Activated T-helper 1 cell treated with anti-CD3 and anti-CD28 coated beads, Interleukin-12 subunit alpha, Interleukin-12 subunit beta, Interleukin-2, Interleukin-4 antibody, amounts not matched to agents 30 ng/mL and 10 ng/mL and 1 ng/mL, durations not matched to agents 14 hours and 24 hours and 36 hours (primary cell): ENCODE measurements at regions of chr1 and their contacts with region 1.

Region 1: DNA sequence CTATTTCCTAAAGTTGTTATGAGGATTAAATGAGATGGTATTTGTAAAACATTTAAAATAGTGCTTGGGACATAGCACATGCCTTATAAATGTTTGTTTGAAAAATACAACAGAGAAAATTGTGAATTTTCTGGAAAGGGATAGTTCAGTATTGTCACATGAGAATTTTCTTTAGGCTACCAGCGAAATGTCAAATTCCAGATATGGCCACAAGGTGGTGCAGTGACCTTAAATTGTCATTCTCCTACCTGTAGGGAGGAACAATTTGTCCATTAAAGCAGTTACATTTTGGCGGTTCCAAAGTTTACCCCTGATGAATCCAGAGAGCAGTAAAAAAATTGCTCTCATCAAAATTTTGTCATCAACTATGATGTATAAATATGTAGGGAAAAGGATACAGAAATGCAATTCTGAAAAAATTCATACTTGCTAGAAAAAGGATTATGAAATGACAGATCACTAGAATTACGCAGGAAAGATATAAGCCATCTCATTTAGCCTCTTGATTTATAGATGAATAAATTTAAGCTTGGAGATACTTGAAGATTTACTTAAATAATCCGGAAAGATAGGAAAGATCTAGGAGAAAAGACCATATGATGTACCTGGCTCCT is 50.2 kb upstream of the TSHB start:
- DNase-seq: peak; percentile 27
- H3K4me3 Mint-ChIP-seq: no peak overlapping the region
- H3K27ac Mint-ChIP-seq: no peak overlapping the region
- H3K4me1 Mint-ChIP-seq: no peaks in the 10 kb centered on the region
- H3K27me3 Mint-ChIP-seq: peaks cover 8% of the 10 kb centered on the region

Region 2: GRCh38 chr1:115052454-115053083 is 73.2 kb after region 1 on chr1:
- intact Hi-C with region 1: loop called (anchors 1 kb)
- DNase-seq: peak; percentile 20
- H3K4me3 Mint-ChIP-seq: no peak overlapping the region
- H3K27ac Mint-ChIP-seq: no peak overlapping the region
- H3K4me1 Mint-ChIP-seq: peaks cover 13% of the 10 kb centered on the region
- H3K27me3 Mint-ChIP-seq: peaks cover 6% of the 10 kb centered on the region

Region 3: DNA sequence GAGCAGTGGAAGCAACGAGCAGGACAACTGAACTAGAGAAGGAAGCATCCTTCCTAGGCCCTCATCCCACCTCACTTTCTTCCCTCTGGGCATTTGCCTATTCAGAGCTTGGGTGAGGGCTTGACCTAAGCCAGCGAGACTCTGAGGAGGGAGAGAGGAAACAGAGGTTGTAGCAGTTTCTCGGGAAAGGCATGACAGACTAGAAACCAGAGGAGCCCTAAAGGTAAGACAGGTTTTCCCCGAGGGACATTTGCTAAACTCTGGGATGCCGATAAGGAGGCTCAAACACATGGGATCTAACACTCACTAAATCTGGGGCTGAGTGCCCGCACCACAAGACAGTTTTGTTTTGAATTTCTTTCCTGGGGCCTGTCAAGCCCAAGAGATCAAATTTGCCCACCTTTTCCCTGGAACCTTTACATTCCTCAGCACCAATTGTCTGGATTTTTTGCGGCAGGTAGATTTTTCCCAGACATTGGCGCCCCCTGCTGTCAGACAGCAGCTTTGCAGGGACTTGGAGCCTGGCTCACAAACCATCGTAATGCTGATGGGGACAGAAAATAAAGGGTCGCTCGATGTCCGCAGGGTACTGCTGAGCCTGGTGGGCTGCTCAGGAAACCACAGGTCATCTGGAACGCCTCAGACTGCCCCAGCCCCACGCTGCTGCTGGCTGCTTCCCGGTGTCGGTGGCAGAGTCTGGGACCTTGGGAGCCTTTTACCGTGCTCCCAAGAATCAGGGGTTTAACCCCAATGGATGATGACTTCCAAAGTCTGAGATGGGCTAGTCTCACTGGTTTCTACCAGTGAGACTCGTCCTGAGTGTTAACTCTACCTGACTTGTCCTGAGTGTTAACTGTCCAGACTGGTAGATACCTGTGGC is 133.4 kb after region 1 on chr1:
- intact Hi-C with region 1: loop called (anchors 1 kb)
- DNase-seq: peak; percentile 20
- H3K4me3 Mint-ChIP-seq: no peak overlapping the region
- H3K27ac Mint-ChIP-seq: no peak overlapping the region
- H3K4me1 Mint-ChIP-seq: no peaks in the 10 kb centered on the region
- H3K27me3 Mint-ChIP-seq: peaks cover 5% of the 10 kb centered on the region